IMR-90 (cell line): ENCODE measurements at regions of chrX and their contacts with region 1.

Region 1: DNA sequence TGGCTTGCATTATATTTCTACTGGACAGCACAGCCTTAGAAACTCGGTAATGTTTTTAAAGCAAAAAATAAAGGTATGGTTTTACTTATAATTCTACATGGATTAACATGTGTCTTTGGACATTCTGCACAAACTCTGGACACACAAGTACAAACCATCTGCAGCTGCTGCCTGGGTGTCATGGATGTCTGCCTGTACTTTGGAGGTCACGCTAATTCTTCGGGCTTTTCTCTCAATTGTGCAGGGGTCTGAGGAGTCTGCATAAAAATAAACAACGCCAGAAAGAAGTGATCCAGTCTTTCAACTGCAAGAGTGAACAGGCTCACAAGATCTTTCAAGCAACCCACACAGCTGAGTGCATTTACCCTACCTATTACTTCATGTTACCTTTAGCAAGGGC is 55.2 kb downstream of the TAB3 start:
- DNase-seq: no peak
- ATAC-seq: no peak
- H3K4me3 ChIP-seq: no peak overlapping the region
- H3K27ac ChIP-seq: no peak overlapping the region
- H3K4me1 ChIP-seq: no peaks in the 10 kb centered on the region
- H3K27me3 ChIP-seq: no peaks in the 10 kb centered on the region
- CTCF ChIP-seq: no peak
- POLR2A ChIP-seq: no peak
- RAD21 ChIP-seq: no peak

Region 2: DNA sequence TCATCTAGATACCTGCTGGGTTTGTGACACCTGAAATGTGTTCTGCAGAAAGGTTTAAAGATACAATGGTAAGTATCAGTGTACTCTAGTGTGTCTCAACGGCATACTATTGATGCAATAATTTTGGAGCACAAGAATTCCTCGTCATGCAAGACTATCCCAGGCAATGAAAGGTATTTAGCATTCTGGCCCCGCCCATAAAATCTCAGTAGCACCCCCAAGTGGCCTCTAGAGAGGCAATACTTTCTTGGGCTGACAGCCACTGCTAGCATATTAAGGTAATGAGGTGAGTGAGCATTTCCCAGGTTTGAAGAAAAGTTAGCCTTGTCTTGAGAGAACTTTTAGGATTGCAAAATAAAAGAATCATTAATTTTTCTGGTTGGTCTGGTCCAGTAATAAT is 31.1 kb after region 1 on chrX:
- CTCF ChIA-PET with region 1: no interaction called
- POLR2A ChIA-PET with region 1: interaction called, 13 read pairs
- dilution Hi-C with region 1: no loop called
- in situ Hi-C with region 1: no loop called
- intact Hi-C with region 1: no loop called
- DNase-seq: no peak
- ATAC-seq: no peak
- H3K4me3 ChIP-seq: no peak overlapping the region
- H3K27ac ChIP-seq: no peak overlapping the region
- H3K4me1 ChIP-seq: peaks cover 2% of the 10 kb centered on the region; the same call in 1 of the 2 replicates
- H3K27me3 ChIP-seq: no peaks in the 10 kb centered on the region
- CTCF ChIP-seq: 0 out of 2 replicates have a peak, but pooled peaks have one; percentile 10
- POLR2A ChIP-seq: no peak
- RAD21 ChIP-seq: no peak